Activated CD8-positive, alpha-beta memory T cell treated with anti-CD3 and anti-CD28 coated beads, Interleukin-2, amount 10 ng/mL, durations not matched to agents 7 days and 5 days (primary cell): ENCODE measurements at regions of chr1 and their contacts with region 1.

Region 1: DNA sequence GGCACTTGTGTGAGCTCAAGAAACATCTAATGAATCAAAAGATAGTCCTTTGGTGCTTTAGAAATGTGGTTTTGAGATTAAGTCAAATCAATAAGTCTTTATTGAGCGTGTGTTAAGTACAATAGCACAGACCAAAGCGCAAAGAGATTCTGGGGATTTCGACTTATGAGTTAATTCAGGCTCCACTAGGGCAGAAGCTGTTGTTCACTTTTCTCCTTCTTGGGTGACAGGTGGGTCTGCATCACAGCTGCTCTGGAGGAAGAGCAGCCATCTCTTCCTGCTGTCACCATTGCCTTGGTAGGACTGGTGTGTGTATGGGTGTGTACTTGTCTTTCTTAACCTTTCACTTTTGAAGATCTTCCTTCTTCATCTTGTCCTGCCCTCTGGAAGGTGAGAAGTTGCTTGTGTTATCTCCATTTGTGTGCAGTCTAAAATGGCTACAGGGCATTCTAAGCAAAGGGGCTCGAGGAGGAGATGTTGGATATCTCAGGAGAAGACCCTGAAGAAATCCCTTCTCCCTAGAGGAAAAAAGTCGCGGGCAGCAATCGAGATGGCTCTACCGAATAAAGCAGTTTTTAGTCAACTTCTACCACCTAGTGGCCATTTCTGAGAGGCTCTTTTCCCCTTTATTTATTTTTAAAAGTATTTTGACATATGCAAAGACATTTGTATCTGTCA is 22.9 kb upstream of the DISC1 start:
- DNase-seq: peak; percentile 63
- ATAC-seq: peak; percentile 89
- H3K4me3 Mint-ChIP-seq: peak overlapping the region; percentile 83
- H3K27ac Mint-ChIP-seq: peak overlapping the region; percentile 86
- H3K4me1 Mint-ChIP-seq: peaks cover 18% of the 10 kb centered on the region
- H3K27me3 Mint-ChIP-seq: peaks cover 17% of the 10 kb centered on the region

Region 2: DNA sequence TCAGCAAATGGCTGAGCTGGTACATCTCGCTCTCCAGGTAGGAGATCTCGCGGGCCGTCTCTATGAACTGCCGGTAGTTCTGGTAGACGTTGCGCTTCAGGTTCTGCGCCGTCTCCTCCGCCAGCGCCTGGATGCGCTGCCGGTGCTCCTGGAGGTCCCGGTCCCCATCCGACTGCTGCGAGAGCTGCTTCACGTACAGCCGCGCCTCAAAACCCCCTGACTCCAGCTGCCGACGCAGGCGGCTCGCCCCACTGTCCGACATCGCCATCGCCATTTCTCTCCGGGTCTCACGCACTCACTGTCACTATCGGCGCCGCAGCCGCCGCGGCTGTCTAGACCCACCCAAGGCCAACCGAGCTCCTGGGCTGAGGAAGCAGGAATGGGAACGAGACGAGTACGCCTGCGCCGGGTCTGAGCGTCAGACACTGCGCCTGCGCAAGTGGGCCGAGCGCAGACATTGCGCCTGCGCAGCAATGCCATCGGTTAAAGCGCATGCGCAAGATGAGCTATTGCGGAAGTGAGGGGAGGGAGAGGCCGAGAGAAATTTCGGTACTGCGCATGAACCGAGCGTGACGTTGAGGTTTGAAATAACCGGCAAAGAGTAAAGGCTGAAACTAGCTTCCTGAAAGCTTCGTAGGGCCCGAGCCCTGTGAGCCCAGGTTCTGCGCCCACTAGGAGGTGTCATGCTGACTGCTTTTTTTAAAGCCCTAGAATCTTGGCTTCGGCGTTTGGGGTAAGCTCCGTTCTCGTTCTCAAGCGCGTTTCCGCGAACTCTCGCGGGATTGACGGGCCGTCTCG is 266.1 kb before region 1 on chr1 and contains the start of gene EXOC8:
- CTCF ChIA-PET with region 1: interaction called, 13 read pairs
- DNase-seq: peak; percentile 97
- ATAC-seq: peak; percentile 85
- H3K4me3 Mint-ChIP-seq: peak within 1 kb of the TSS; percentile 97
- H3K27ac Mint-ChIP-seq: peak within 1 kb of the TSS; percentile 98
- H3K4me1 Mint-ChIP-seq: peaks cover 60% of the 10 kb centered on the region
- H3K27me3 Mint-ChIP-seq: peaks cover 3% of the 10 kb centered on the region
- total RNA-seq, gene EXOC8: 18.8 to 19.3 TPM

Region 3: DNA sequence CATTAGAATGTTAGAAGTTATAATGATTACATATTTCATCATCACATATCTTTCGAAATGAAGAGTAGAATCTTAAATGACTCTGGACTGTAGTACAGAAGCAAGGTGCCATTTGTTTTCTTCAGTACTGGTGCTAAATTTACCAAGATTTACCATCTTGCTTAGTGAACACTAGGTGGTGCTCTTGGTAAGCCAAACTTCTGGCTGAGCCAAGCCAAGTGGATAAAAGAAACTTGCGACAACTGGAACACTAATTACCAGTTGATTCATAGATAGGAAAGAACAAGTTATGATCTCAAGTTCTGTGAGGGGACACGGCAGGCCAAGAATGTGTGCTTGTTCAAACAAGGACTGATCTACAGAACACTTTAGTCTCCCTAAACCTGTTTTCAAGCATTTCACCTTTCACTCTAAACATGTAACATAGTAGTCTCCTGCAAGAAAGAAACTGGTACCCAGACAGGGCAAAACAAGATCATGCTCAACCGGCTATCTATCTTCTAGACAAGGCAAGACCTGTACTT is 245.8 kb before region 1 on chr1:
- CTCF ChIA-PET with region 1: interaction called, 26 read pairs
- DNase-seq: peak; percentile 47
- ATAC-seq: peak; percentile 87
- H3K4me3 Mint-ChIP-seq: no peak overlapping the region
- H3K27ac Mint-ChIP-seq: peak overlapping the region; percentile 69
- H3K4me1 Mint-ChIP-seq: peaks cover 12% of the 10 kb centered on the region
- H3K27me3 Mint-ChIP-seq: no peaks in the 10 kb centered on the region

Region 4: GRCh38 chr1:231523816-231524215 is 79.9 kb before region 1 on chr1:
- CTCF ChIA-PET with region 1: no interaction called
- DNase-seq: no peak
- ATAC-seq: no peak
- H3K4me3 Mint-ChIP-seq: no peak overlapping the region
- H3K27ac Mint-ChIP-seq: no peak overlapping the region
- H3K4me1 Mint-ChIP-seq: peaks cover 15% of the 10 kb centered on the region
- H3K27me3 Mint-ChIP-seq: no peaks in the 10 kb centered on the region

Region 5: DNA sequence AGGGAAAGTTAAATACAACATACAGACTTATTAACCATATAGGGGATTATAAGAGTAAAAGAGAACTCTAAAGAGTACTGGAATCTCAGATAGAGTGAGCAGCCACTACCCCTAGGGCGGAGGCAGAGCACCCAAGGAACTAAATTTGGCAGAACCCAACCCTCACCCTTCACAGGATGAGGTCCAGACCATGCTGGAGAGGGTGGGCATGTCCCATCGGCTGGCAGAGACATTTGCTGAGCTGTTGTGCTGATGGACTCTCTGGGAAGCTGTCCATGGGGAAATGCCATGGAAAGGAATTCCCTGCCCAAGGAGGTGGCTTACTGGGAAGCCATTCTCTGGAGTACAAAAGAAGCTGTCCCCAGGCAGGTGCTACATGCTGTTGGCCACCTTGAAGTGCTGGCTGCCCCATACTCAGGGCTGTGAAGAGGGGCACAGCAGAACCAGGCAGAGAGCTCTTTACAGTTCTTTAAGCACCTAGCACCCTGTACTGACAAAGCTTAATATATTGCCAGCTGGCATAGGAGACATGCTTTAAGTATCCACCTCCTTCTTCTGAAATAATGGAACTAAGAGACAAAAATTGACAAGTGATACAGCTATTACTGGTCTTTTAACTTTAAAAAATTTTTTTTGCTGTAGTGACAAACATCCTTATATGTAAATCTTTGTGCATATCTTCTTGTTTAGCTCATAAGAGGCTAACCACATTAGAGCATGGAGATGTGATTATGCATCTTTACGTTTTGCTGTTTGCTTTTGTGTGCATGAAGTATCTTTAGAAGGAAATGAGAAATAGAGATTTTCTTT is 45.6 kb before region 1 on chr1:
- CTCF ChIA-PET with region 1: no interaction called
- DNase-seq: no peak
- ATAC-seq: no peak
- H3K4me3 Mint-ChIP-seq: no peak overlapping the region
- H3K27ac Mint-ChIP-seq: no peak overlapping the region
- H3K4me1 Mint-ChIP-seq: peaks cover 23% of the 10 kb centered on the region
- H3K27me3 Mint-ChIP-seq: no peaks in the 10 kb centered on the region

Region 6: GRCh38 chr1:231590453-231591198 is 13.1 kb before region 1 on chr1:
- CTCF ChIA-PET with region 1: interaction called, 10 read pairs
- DNase-seq: peak; percentile 55
- ATAC-seq: peak; percentile 80
- H3K4me3 Mint-ChIP-seq: no peak overlapping the region
- H3K27ac Mint-ChIP-seq: no peak overlapping the region
- H3K4me1 Mint-ChIP-seq: peaks cover 7% of the 10 kb centered on the region
- H3K27me3 Mint-ChIP-seq: no peaks in the 10 kb centered on the region